IMR-90 (cell line): ENCODE measurements at regions of chr2 and their contacts with region 1.

Region 1: GRCh38 chr2:169916623-169917022 is 89.4 kb downstream of the UBR3 start:
- DNase-seq: no peak
- ATAC-seq: no peak
- H3K4me3 ChIP-seq: no peak overlapping the region
- H3K27ac ChIP-seq: no peak overlapping the region
- H3K4me1 ChIP-seq: peaks cover 3% of the 10 kb centered on the region; the same call in 1 of the 2 replicates
- H3K27me3 ChIP-seq: no peaks in the 10 kb centered on the region
- CTCF ChIP-seq: no peak
- POLR2A ChIP-seq: no peak
- RAD21 ChIP-seq: no peak

Region 2: DNA sequence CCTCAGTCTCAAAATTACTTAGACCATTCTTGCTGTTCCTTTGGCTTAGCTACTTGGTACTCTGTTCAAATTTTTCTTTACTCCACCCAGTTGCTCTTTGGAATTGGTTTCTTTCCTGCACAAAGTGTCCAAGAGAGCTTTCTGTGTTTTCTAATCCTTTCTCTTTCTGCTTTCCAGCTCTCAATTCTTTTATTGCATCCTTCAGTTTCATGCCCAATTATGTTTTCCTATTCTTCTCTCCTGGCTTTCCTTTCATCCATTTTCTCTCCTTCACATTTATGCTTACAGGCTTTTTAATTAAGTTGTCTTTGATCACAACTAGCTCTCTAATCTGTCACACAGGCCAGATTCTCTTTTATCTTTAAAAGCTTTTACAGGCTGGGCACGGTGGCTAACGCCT is 51.1 kb before region 1 on chr2:
- CTCF ChIA-PET with region 1: no interaction called
- POLR2A ChIA-PET with region 1: no interaction called
- dilution Hi-C with region 1: no loop called
- in situ Hi-C with region 1: no loop called
- intact Hi-C with region 1: loop called (anchors 1 kb)
- DNase-seq: no peak
- ATAC-seq: no peak
- H3K4me3 ChIP-seq: no peak overlapping the region
- H3K27ac ChIP-seq: no peak overlapping the region
- H3K4me1 ChIP-seq: peaks cover 2% of the 10 kb centered on the region
- H3K27me3 ChIP-seq: no peaks in the 10 kb centered on the region
- CTCF ChIP-seq: no peak
- POLR2A ChIP-seq: no peak
- RAD21 ChIP-seq: no peak

Region 3: DNA sequence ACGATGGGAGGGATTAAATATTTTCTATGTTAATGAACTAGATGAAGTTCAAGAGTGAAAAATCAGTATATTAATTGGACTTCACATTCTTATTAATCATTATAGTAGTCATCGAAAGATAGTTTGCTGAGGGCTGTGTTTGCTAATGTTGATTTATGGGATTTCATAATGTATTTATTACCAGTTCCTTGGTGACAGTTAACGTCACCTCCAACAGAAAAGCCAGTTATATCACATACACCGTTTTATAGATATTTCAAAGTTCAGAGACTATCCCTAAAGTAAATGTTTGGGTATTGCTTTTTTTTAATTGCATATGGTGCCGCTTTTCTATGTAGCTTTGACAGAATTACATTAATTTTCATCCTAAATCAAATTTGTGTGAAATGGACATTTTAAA is 749.1 kb after region 1 on chr2:
- CTCF ChIA-PET with region 1: no interaction called
- POLR2A ChIA-PET with region 1: no interaction called
- dilution Hi-C with region 1: no loop called
- in situ Hi-C with region 1: no loop called
- intact Hi-C with region 1: no loop called
- DNase-seq: no peak
- ATAC-seq: no peak
- H3K4me3 ChIP-seq: no peak overlapping the region
- H3K27ac ChIP-seq: no peak overlapping the region
- H3K4me1 ChIP-seq: no peaks in the 10 kb centered on the region
- H3K27me3 ChIP-seq: no peaks in the 10 kb centered on the region
- CTCF ChIP-seq: no peak
- POLR2A ChIP-seq: no peak
- RAD21 ChIP-seq: no peak